ENCODE measurements at regions of chr14 and their contacts with region 1.

Region 1: GRCh38 chr14:76918751-76919543 is 92.7 kb downstream of the LRRC74A start:
- DNase-seq: no peak
- ATAC-seq: peak; percentile 11
- H3K4me3 ChIP-seq: no peak overlapping the region
- H3K27ac ChIP-seq: no peak overlapping the region
- H3K4me1 ChIP-seq: peaks cover 5% of the 10 kb centered on the region
- H3K27me3 ChIP-seq: no peaks in the 10 kb centered on the region
- CTCF ChIP-seq: 0 out of 6 replicates have a peak, but pooled peaks of 1 of the 3 experiments have one; percentile 8
- EP300 ChIP-seq: no peak
- POLR2A ChIP-seq: no peak
- RAD21 ChIP-seq: peak; percentile 36; the same call in 1 of the 2 replicates

Region 2: DNA sequence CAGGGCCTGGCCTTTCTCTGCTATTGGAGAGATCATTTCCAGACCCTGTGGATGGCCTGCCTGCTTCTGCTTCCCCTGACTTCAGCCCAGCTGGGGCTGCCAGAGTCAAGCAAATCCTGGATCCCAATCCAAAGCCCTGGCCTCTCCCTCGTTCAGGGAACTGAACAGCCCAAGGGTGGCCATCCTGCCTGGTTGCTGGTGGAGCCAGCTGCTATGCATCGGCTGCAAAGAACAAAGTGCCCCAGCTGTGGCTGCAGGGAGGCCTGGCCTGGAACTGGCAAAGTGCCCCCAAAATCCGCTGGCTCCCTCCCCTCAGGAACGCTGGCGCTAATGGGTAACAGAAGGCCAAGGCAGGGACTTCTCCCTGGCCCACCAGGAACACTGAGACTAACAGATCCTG is 36.3 kb before region 1 on chr14:
- CTCF ChIA-PET with region 1: interaction called, 77 read pairs
- POLR2A ChIA-PET with region 1: no interaction called
- RAD21 ChIA-PET with region 1: interaction called, 59 read pairs
- SMC1A ChIA-PET with region 1: no interaction called
- in situ Hi-C with region 1: no loop called
- intact Hi-C with region 1: no loop called
- DNase-seq: no peak
- ATAC-seq: no peak
- H3K4me3 ChIP-seq: no peak overlapping the region
- H3K27ac ChIP-seq: no peak overlapping the region
- H3K4me1 ChIP-seq: no peaks in the 10 kb centered on the region
- H3K27me3 ChIP-seq: peaks cover 2 to 3% of the 10 kb centered on the region in 2 experiments; a peak in 2 of 4 replicates
- CTCF ChIP-seq: no peak
- EP300 ChIP-seq: no peak
- POLR2A ChIP-seq: no peak
- RAD21 ChIP-seq: no peak

Region 3: GRCh38 chr14:76941946-76942805 is 23.2 kb after region 1 on chr14:
- CTCF ChIA-PET with region 1: interaction called, 189 read pairs
- POLR2A ChIA-PET with region 1: interaction called, 53 read pairs
- RAD21 ChIA-PET with region 1: interaction called, 233 read pairs
- SMC1A ChIA-PET with region 1: interaction called, 233 read pairs
- in situ Hi-C with region 1: no loop called
- intact Hi-C with region 1: loop called (anchors 2 kb)
- DNase-seq: peak; percentile 72
- ATAC-seq: peak; percentile 29
- H3K4me3 ChIP-seq: no peak overlapping the region
- H3K27ac ChIP-seq: no peak overlapping the region
- H3K4me1 ChIP-seq: peaks cover 21% of the 10 kb centered on the region
- H3K27me3 ChIP-seq: no peaks in the 10 kb centered on the region
- CTCF ChIP-seq: no peak; a peak in 1 of 6 replicates
- EP300 ChIP-seq: no peak
- POLR2A ChIP-seq: no peak
- RAD21 ChIP-seq: no peak

Region 4: GRCh38 chr14:76962303-76962660 is 43.3 kb after region 1 on chr14:
- CTCF ChIA-PET with region 1: interaction called, 50 read pairs
- POLR2A ChIA-PET with region 1: interaction called, 9 read pairs
- RAD21 ChIA-PET with region 1: interaction called, 51 read pairs
- SMC1A ChIA-PET with region 1: interaction called, 35 read pairs
- in situ Hi-C with region 1: no loop called
- intact Hi-C with region 1: no loop called
- DNase-seq: no peak
- ATAC-seq: no peak
- H3K4me3 ChIP-seq: peak overlapping the region; percentile 50; the same call in 1 of the 2 replicates
- H3K27ac ChIP-seq: peak overlapping the region; percentile 90
- H3K4me1 ChIP-seq: peaks cover 77% of the 10 kb centered on the region
- H3K27me3 ChIP-seq: no peaks in the 10 kb centered on the region
- CTCF ChIP-seq: no peak
- EP300 ChIP-seq: no peak
- POLR2A ChIP-seq: no peak
- RAD21 ChIP-seq: no peak

Region 5: GRCh38 chr14:77028384-77029231 is 109.7 kb after region 1 on chr14 and contains the start of gene IRF2BPL:
- CTCF ChIA-PET with region 1: interaction called, 25 read pairs
- POLR2A ChIA-PET with region 1: interaction called, 5 read pairs
- RAD21 ChIA-PET with region 1: interaction called, 23 read pairs
- SMC1A ChIA-PET with region 1: interaction called, 17 read pairs
- in situ Hi-C with region 1: no loop called
- intact Hi-C with region 1: no loop called
- DNase-seq: peak; percentile 87
- ATAC-seq: peak; percentile 61
- H3K4me3 ChIP-seq: peak within 1 kb of the TSS; percentile 81
- H3K27ac ChIP-seq: peak within 1 kb of the TSS; percentile 98
- H3K4me1 ChIP-seq: peaks cover 38% of the 10 kb centered on the region
- H3K27me3 ChIP-seq: no peaks in the 10 kb centered on the region
- CTCF ChIP-seq: no peak
- EP300 ChIP-seq: peak in 1 of 2 experiments; percentile 29; a peak in 2 of 4 replicates
- POLR2A ChIP-seq: peak; percentile 83
- RAD21 ChIP-seq: no peak
- polyA plus RNA-seq, gene IRF2BPL: 1.2 to 1.9 TPM

Region 6: DNA sequence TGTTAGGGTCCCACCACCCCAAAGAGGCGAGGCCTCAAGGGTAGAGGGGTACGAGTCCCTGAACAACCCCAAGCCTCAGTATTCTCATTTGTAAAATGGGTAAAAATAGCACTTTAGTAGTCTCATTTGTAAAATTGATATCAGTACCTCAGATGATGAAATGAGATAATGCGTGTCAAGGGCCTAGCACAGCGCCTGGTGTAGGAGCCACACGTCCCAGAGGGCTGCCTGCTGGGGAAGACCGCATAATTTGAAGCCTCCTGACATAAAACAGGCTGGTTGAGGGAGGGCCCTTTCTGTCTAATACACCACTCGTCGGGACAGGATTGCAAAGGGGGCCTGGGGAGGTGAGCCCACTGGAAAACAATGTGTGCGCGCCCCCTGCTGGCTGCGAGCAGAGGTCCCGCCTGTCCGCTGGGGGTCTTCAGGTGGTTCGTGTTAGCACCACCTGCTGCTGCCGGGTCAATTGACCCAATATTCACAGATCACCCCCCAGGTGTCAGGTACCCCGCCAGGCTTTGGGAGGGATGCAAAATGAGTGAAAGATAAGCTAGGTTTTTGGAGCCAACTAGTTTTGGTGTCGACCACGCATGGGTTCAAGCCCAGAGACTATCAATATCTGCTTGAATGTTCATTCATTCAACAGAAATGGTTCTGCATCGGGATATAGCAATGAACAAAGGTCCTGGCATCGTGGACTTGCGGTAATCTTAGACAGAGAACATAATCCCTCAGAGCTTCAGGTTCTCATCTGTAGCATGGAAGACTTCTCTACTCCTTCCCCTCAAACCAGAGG is 134.3 kb after region 1 on chr14:
- CTCF ChIA-PET with region 1: interaction called, 170 read pairs
- POLR2A ChIA-PET with region 1: interaction called, 11 read pairs
- RAD21 ChIA-PET with region 1: interaction called, 119 read pairs
- SMC1A ChIA-PET with region 1: interaction called, 174 read pairs
- in situ Hi-C with region 1: no loop called
- intact Hi-C with region 1: no loop called
- DNase-seq: no peak
- ATAC-seq: peak; percentile 98
- H3K4me3 ChIP-seq: no peak overlapping the region
- H3K27ac ChIP-seq: no peak overlapping the region
- H3K4me1 ChIP-seq: peaks cover 12% of the 10 kb centered on the region
- H3K27me3 ChIP-seq: no peaks in the 10 kb centered on the region
- CTCF ChIP-seq: peak; percentile 77 to 90 (median 85)
- EP300 ChIP-seq: no peak
- POLR2A ChIP-seq: no peak
- RAD21 ChIP-seq: peak; percentile 91

Region 7: GRCh38 chr14:77131871-77132486 is 213.0 kb after region 1 on chr14:
- CTCF ChIA-PET with region 1: no interaction called
- POLR2A ChIA-PET with region 1: no interaction called
- RAD21 ChIA-PET with region 1: no interaction called
- SMC1A ChIA-PET with region 1: no interaction called
- in situ Hi-C with region 1: no loop called
- intact Hi-C with region 1: no loop called
- DNase-seq: no peak
- ATAC-seq: no peak
- H3K4me3 ChIP-seq: no peak overlapping the region
- H3K27ac ChIP-seq: no peak overlapping the region
- H3K4me1 ChIP-seq: no peaks in the 10 kb centered on the region
- H3K27me3 ChIP-seq: peaks cover 6 to 11% of the 10 kb centered on the region in 2 experiments
- CTCF ChIP-seq: 0 out of 6 replicates have a peak, but pooled peaks of 2 of the 3 experiments have one; percentile 1 to 10
- EP300 ChIP-seq: no peak
- POLR2A ChIP-seq: no peak
- RAD21 ChIP-seq: no peak

Measured in GM12878 (cell line).